Activated T-helper 1 cell treated with anti-CD3 and anti-CD28 coated beads, Interleukin-12 subunit alpha, Interleukin-12 subunit beta, Interleukin-2, Interleukin-4 antibody, amounts not matched to agents 30 ng/mL and 10 ng/mL and 1 ng/mL, durations not matched to agents 14 hours and 24 hours and 36 hours (primary cell): ENCODE measurements at regions of chr10 and their contacts with region 1.

Region 1: DNA sequence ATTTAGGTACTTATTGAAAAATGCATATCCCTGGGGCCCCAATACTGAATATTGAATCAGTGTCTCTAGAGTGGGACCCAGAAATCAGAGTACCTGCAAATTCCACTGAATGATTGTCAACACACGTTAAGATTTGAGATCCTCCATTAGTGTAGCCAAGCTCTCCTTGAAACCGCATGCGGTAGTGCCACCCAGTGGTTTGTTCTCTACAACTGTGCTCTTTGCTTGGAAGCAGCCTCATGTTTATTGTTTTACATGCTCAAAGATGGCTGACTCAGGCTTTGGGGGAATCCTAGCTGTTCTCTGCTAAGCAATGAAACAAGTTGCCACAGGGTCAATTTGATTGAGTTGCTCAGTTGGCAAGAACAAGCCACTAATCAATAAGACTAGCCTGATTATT is 340.2 kb upstream of the CELF2 start:
- DNase-seq: no peak
- H3K4me3 Mint-ChIP-seq: no peak overlapping the region
- H3K27ac Mint-ChIP-seq: no peak overlapping the region
- H3K4me1 Mint-ChIP-seq: no peaks in the 10 kb centered on the region
- H3K27me3 Mint-ChIP-seq: peaks cover 2% of the 10 kb centered on the region

Region 2: DNA sequence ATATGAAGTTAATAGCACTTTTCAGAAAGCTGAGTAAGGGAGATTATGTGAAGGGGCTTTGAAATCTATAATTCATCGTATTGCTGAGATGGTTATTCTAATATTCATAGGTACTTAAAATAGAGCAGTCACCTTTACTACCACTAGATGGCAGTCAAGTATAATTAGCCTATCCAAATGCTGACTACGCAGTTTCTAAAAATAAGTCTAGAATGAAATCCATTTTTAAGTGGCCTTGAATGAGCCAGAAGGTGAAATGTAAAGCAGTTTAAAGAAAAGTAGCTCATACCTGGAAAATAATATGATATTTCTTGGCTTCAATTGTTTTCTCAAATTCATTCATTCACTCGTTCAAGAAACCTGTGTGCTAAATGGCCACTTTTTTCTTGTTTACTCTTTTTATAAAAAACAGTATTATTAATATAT is 1345.9 kb before region 1 on chr10:
- intact Hi-C with region 1: loop called (anchors 5 kb)
- DNase-seq: no peak
- H3K4me3 Mint-ChIP-seq: no peak overlapping the region
- H3K27ac Mint-ChIP-seq: no peak overlapping the region
- H3K4me1 Mint-ChIP-seq: no peaks in the 10 kb centered on the region
- H3K27me3 Mint-ChIP-seq: no peaks in the 10 kb centered on the region

Region 3: GRCh38 chr10:10629512-10629911 is 48.0 kb before region 1 on chr10:
- intact Hi-C with region 1: no loop called
- DNase-seq: no peak
- H3K4me3 Mint-ChIP-seq: no peak overlapping the region
- H3K27ac Mint-ChIP-seq: no peak overlapping the region
- H3K4me1 Mint-ChIP-seq: no peaks in the 10 kb centered on the region
- H3K27me3 Mint-ChIP-seq: peaks cover 3% of the 10 kb centered on the region